ENCODE measurements at regions of chr4 and their contacts with region 1.

Region 1: GRCh38 chr4:75048208-75048879 is 115.4 kb downstream of the PARM1 start:
- DNase-seq: no peak
- H3K4me3 ChIP-seq: no peak overlapping the region
- H3K27ac ChIP-seq: no peak overlapping the region
- H3K4me1 ChIP-seq: no peaks in the 10 kb centered on the region
- H3K27me3 ChIP-seq: no peaks in the 10 kb centered on the region
- CTCF ChIP-seq: no peak
- POLR2A ChIP-seq: no peak

Region 2: GRCh38 chr4:75028196-75028854 is 20.0 kb before region 1 on chr4:
- CTCF ChIA-PET with region 1: no interaction called
- POLR2A ChIA-PET with region 1: no interaction called
- dilution Hi-C with region 1: no loop called
- intact Hi-C with region 1: no loop called
- DNase-seq: no peak
- H3K4me3 ChIP-seq: no peak overlapping the region
- H3K27ac ChIP-seq: no peak overlapping the region
- H3K4me1 ChIP-seq: no peaks in the 10 kb centered on the region
- H3K27me3 ChIP-seq: no peaks in the 10 kb centered on the region
- CTCF ChIP-seq: no peak
- POLR2A ChIP-seq: no peak

Region 3: GRCh38 chr4:75065909-75066308 is 17.6 kb after region 1 on chr4:
- CTCF ChIA-PET with region 1: interaction called, 3 read pairs
- POLR2A ChIA-PET with region 1: no interaction called
- dilution Hi-C with region 1: no loop called
- intact Hi-C with region 1: loop called (anchors 1 kb)
- DNase-seq: no peak
- H3K4me3 ChIP-seq: no peak overlapping the region
- H3K27ac ChIP-seq: no peak overlapping the region
- H3K4me1 ChIP-seq: no peaks in the 10 kb centered on the region
- H3K27me3 ChIP-seq: no peaks in the 10 kb centered on the region
- CTCF ChIP-seq: no peak
- POLR2A ChIP-seq: no peak

Measured in endothelial cell of umbilical vein (primary cell).